ENCODE measurements at regions of chr22 and their contacts with region 1.

Region 1: GRCh38 chr22:30089655-30089974 is 9.4 kb downstream of the HORMAD2 start:
- DNase-seq: no peak
- H3K4me3 ChIP-seq: no peak overlapping the region
- H3K27ac ChIP-seq: no peak overlapping the region
- H3K27me3 ChIP-seq: no peaks in the 10 kb centered on the region
- CTCF ChIP-seq: no peak

Region 2: DNA sequence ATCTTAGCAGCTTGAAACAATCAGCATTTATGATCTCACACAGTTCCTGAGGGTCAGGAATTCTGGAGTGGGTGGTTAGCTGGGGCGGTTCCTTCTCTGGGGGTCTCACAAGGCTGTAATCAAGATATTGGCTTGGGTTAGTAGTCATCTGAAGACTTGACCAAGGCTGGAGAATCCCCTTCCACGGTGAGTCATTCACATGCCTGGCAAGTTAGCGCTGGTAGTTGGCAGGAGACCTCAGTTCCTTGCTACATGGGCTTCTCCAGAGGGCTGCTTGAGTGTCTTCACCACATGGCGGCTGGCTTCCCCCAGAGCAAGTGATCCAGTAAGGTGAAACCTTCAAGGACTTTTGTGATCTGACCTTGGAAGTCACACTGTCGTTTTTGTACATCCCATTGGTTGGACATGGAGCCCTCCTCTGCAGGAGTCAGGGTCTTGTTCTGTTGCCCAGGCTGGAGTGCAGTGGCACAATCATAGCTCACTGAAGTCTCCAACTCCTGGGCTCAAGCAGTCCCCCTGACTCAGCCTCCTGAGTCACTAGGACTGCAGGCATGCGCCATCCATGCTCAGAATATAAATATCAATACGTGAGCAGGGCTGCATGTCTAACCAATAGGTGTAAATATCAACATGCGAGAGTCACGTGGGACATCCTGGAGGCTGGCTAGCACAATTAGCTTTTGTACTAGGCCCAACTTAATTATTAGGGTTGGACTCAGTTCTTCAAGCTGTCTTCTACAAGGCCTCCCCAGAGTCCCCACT is 501.5 kb before region 1 on chr22:
- CTCF ChIA-PET with region 1: interaction called, 12 read pairs
- POLR2A ChIA-PET with region 1: no interaction called
- DNase-seq: peak; percentile 50
- H3K4me3 ChIP-seq: no peak overlapping the region
- H3K27ac ChIP-seq: peak overlapping the region; percentile 47
- H3K27me3 ChIP-seq: no peaks in the 10 kb centered on the region
- CTCF ChIP-seq: no peak

Region 3: DNA sequence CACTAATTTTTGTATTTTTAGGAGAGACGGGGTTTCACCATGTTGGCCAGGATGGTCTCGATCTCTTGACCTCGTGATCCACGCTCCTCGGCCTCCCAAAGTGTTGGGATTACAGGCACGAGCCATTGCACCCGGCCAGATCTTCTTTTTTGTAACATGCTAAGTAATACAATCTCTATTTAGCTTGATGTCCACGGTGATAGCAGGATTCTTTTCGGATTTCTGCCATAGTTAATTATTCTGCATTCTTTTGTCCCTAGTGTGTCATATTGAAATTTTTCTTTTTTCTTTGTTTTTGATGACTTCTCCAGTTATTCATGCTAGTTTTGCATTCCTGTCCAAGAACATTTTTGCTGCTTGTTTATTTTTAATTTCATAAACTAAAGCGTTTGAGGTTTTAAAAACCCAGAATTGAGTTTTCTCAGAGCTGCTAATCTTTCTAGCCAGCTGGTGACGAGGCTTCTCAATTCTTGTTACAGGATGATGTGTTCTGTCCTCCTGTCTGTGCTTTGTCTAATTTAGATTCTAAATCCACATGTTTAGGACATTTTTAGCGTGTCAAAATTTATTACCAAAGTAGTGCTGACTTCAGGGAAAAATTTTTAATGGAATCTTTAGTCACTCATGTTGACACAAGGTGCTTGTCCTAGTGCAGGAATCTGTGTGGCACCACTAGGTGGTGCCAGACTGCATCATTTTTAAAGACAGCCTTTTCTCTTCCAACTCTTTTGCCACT is 464.4 kb before region 1 on chr22:
- CTCF ChIA-PET with region 1: interaction called, 16 read pairs
- POLR2A ChIA-PET with region 1: no interaction called
- DNase-seq: no peak
- H3K4me3 ChIP-seq: no peak overlapping the region
- H3K27ac ChIP-seq: peak overlapping the region; percentile 53
- H3K27me3 ChIP-seq: no peaks in the 10 kb centered on the region
- CTCF ChIP-seq: peak; percentile 91

Region 4: DNA sequence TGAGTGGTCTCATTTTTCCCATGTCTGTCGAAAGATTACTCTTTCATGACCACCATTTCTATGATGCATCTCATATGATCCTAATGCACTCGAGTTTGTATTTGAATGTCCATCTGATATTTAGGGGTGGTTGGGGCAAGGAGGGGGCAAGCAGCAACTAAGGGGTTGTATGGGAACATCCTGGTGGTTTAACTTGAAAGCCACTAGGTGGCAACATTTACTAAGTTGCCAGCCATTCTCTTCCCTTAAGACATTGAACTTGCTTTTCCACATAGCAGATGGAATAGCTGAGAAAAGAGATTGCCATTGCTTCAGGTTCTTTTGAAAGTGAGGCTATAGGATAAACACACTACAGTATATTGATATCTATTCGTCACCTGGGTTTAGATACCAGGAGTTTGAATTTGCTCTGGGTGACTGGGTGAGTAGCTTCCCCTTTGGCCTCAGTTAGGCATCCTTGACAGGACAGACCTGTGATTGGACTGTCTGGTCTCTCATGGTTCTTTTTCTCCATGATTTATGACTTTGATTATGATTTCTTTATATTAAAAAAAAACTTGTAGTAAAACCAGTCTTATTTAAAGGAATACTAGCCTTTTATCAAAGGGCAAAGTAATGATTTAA is 453.8 kb before region 1 on chr22:
- CTCF ChIA-PET with region 1: interaction called, 57 read pairs
- POLR2A ChIA-PET with region 1: no interaction called
- DNase-seq: no peak
- H3K4me3 ChIP-seq: no peak overlapping the region
- H3K27ac ChIP-seq: no peak overlapping the region
- H3K27me3 ChIP-seq: no peaks in the 10 kb centered on the region
- CTCF ChIP-seq: peak; percentile 76

Region 5: GRCh38 chr22:29689880-29690213 is 399.8 kb before region 1 on chr22:
- CTCF ChIA-PET with region 1: interaction called, 35 read pairs
- POLR2A ChIA-PET with region 1: interaction called, 8 read pairs
- DNase-seq: peak; percentile 16
- H3K4me3 ChIP-seq: no peak overlapping the region
- H3K27ac ChIP-seq: no peak overlapping the region
- H3K27me3 ChIP-seq: no peaks in the 10 kb centered on the region
- CTCF ChIP-seq: peak; percentile 90

Region 6: GRCh38 chr22:29701155-29701999 is 388.2 kb before region 1 on chr22:
- CTCF ChIA-PET with region 1: interaction called, 14 read pairs
- POLR2A ChIA-PET with region 1: no interaction called
- DNase-seq: no peak
- H3K4me3 ChIP-seq: no peak overlapping the region
- H3K27ac ChIP-seq: no peak overlapping the region
- H3K27me3 ChIP-seq: peaks cover 4% of the 10 kb centered on the region
- CTCF ChIP-seq: peak; percentile 25

Region 7: DNA sequence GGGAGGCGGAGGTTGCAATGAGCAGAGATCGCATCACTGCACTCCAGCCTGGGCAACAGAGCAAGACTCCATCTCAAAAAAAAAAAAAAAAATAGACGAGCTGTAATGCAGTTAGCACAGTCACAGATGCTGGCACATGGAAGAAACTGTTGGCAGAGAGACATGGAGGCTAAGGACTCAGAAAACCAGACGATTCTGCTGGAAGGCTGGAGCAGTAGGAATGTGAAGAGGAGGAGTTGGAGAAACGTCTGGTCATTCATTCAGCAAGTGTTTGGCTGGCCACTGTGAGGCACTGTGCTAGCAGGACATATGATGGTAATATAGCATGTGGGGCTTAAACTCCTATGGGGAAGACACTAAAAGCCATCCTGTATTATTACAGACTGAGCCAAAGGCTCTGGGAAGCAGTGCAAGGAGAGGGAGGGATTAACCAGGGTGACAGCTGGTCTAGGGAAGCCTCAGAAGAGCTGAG is 317.4 kb before region 1 on chr22:
- CTCF ChIA-PET with region 1: interaction called, 20 read pairs
- POLR2A ChIA-PET with region 1: no interaction called
- DNase-seq: peak; percentile 38
- H3K4me3 ChIP-seq: no peak overlapping the region
- H3K27ac ChIP-seq: no peak overlapping the region
- H3K27me3 ChIP-seq: no peaks in the 10 kb centered on the region
- CTCF ChIP-seq: peak; percentile 66

Region 8: GRCh38 chr22:30127749-30128166 is 38.1 kb after region 1 on chr22:
- CTCF ChIA-PET with region 1: no interaction called
- POLR2A ChIA-PET with region 1: no interaction called
- DNase-seq: peak; percentile 29
- H3K4me3 ChIP-seq: no peak overlapping the region
- H3K27ac ChIP-seq: no peak overlapping the region
- H3K27me3 ChIP-seq: no peaks in the 10 kb centered on the region
- CTCF ChIP-seq: no peak

Region 9: DNA sequence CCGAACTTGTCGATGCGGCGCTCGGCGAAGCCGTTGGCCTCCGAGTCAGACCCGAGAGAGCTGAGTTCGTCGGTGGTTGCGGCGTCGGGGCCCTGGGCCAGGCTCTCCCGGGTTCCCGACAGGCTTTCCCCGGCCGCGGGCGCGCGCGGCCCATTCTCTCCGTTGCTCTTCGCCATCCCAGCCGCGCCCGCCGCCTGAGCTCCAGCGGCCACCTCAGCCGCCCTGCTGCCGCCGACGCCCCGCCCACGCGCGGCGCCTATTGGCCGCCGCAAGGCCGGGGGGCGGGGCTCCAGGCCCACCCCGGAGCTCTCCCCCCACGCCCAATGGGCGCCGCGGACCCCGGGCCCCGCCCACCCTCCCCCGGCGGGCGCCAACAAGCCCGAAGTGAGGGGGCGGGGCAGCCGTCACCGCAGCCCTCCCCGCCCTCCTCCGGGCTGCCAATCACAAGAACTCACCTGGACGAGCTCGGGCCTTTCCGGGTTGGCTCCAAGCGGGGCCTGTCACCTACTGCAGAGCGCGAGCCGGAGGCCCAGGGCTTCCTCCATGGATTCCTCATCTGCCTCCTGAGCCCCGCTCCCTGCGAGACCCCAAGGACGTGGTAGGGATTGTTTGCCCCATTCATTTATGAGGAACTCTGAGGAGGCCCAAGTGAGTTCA is 237.2 kb after region 1 on chr22 and contains the start of gene TBC1D10A:
- CTCF ChIA-PET with region 1: no interaction called
- POLR2A ChIA-PET with region 1: no interaction called
- DNase-seq: peak; percentile 57
- H3K4me3 ChIP-seq: peak within 1 kb of the TSS; percentile 83
- H3K27ac ChIP-seq: peak within 1 kb of the TSS; percentile 58
- H3K27me3 ChIP-seq: no peaks in the 10 kb centered on the region
- CTCF ChIP-seq: no peak
- polyA plus RNA-seq, gene TBC1D10A: 14.5 and 17.5 TPM in 2 replicates